CD8-positive, alpha-beta T cell (primary cell): ENCODE measurements at regions of chr6 and their contacts with region 1.

Region 1: GRCh38 chr6:78995946-78996345 is 82.1 kb downstream of the PHIP start:
- DNase-seq: no peak
- ATAC-seq: no peak
- H3K4me3 ChIP-seq: no peak overlapping the region
- H3K4me3 Mint-ChIP-seq: no peak overlapping the region
- H3K27ac ChIP-seq: no peak overlapping the region
- H3K27ac Mint-ChIP-seq: no peak overlapping the region
- H3K4me1 ChIP-seq: no peaks in the 10 kb centered on the region
- H3K4me1 Mint-ChIP-seq: peaks cover 1% of the 10 kb centered on the region
- H3K27me3 ChIP-seq: no peaks in the 10 kb centered on the region
- H3K27me3 Mint-ChIP-seq: no peaks in the 10 kb centered on the region
- CTCF ChIP-seq: no peak

Region 2: GRCh38 chr6:78961513-78961912 is 34.4 kb before region 1 on chr6:
- CTCF ChIA-PET with region 1: no interaction called
- POLR2A ChIA-PET with region 1: no interaction called
- intact Hi-C with region 1: loop called (anchors 5 kb)
- DNase-seq: no peak
- ATAC-seq: no peak
- H3K4me3 ChIP-seq: no peak overlapping the region
- H3K4me3 Mint-ChIP-seq: no peak overlapping the region
- H3K27ac ChIP-seq: no peak overlapping the region
- H3K27ac Mint-ChIP-seq: no peak overlapping the region
- H3K4me1 ChIP-seq: no peaks in the 10 kb centered on the region
- H3K4me1 Mint-ChIP-seq: no peaks in the 10 kb centered on the region
- H3K27me3 ChIP-seq: no peaks in the 10 kb centered on the region
- H3K27me3 Mint-ChIP-seq: no peaks in the 10 kb centered on the region
- CTCF ChIP-seq: no peak

Region 3: DNA sequence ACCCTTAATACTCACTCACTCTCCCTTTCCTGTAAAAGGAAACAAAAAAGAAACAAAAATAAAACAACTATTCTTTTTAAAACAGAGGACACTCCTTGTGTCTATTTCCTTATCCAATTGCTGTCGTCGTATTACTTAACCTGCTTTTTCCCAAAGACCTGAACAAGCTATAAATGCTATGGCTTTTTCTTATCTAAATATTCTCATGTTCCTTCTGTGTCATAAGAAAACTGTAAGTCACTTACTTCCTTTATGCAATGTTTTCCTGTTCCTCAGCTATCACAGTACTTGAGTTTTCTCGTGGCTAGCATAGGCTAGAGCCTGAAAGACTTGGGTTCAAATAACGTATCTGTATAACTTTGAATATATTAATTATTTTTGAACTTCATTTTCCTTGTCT is 29.4 kb before region 1 on chr6:
- CTCF ChIA-PET with region 1: no interaction called
- POLR2A ChIA-PET with region 1: no interaction called
- intact Hi-C with region 1: loop called (anchors 5 kb)
- DNase-seq: no peak
- ATAC-seq: no peak
- H3K4me3 ChIP-seq: no peak overlapping the region
- H3K4me3 Mint-ChIP-seq: no peak overlapping the region
- H3K27ac ChIP-seq: no peak overlapping the region
- H3K27ac Mint-ChIP-seq: no peak overlapping the region
- H3K4me1 ChIP-seq: no peaks in the 10 kb centered on the region
- H3K4me1 Mint-ChIP-seq: no peaks in the 10 kb centered on the region
- H3K27me3 ChIP-seq: no peaks in the 10 kb centered on the region
- H3K27me3 Mint-ChIP-seq: no peaks in the 10 kb centered on the region
- CTCF ChIP-seq: no peak

Region 4: DNA sequence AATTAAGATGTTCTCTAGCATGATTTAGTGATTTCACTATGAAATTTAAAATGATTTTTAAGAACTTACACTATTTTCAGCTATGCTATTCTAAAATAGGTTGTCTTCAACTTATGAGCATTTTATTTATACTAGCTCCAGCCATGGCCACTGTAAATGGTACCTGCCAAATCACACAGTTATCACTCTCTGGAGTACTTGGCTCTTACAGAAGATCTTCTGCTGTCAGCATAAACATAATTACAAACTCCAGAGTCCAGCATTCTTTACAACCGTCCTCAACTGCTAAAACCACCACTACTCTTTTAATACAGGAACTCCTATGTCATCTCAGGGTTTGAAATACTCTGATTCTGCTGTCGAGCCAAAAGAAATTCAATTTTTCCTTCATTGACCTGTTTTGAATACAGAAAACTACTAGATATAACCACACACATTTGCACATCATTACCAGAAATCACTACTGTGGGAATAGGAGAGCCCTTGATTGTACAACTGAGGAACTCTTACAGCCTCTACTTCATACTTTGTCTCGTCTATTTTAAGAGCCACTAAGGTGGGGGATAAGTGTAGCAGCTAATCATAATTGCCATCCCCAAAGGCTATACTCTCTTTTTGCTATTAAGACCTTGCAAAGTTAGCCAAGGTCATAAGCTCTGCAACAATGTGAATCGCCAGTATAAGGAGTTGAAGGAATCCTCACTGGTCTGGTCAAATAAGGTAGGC is 11.6 kb before region 1 on chr6:
- CTCF ChIA-PET with region 1: no interaction called
- POLR2A ChIA-PET with region 1: no interaction called
- intact Hi-C with region 1: loop called in 1 of 2 experiments (anchors 2 kb)
- DNase-seq: no peak
- ATAC-seq: no peak
- H3K4me3 ChIP-seq: no peak overlapping the region
- H3K4me3 Mint-ChIP-seq: no peak overlapping the region
- H3K27ac ChIP-seq: no peak overlapping the region
- H3K27ac Mint-ChIP-seq: peak overlapping the region; percentile 23
- H3K4me1 ChIP-seq: no peaks in the 10 kb centered on the region
- H3K4me1 Mint-ChIP-seq: peaks cover 10% of the 10 kb centered on the region
- H3K27me3 ChIP-seq: no peaks in the 10 kb centered on the region
- H3K27me3 Mint-ChIP-seq: no peaks in the 10 kb centered on the region
- CTCF ChIP-seq: no peak

Region 5: GRCh38 chr6:80457439-80457933 is 1461.5 kb after region 1 on chr6:
- CTCF ChIA-PET with region 1: no interaction called
- POLR2A ChIA-PET with region 1: no interaction called
- intact Hi-C with region 1: loop called in 1 of 2 experiments (anchors 10 kb)
- DNase-seq: no peak
- ATAC-seq: no peak
- H3K4me3 ChIP-seq: no peak overlapping the region
- H3K4me3 Mint-ChIP-seq: no peak overlapping the region
- H3K27ac ChIP-seq: no peak overlapping the region
- H3K27ac Mint-ChIP-seq: no peak overlapping the region
- H3K4me1 ChIP-seq: no peaks in the 10 kb centered on the region
- H3K4me1 Mint-ChIP-seq: peaks cover 1% of the 10 kb centered on the region
- H3K27me3 ChIP-seq: no peaks in the 10 kb centered on the region
- H3K27me3 Mint-ChIP-seq: no peaks in the 10 kb centered on the region
- CTCF ChIP-seq: no peak